Activated T-helper 1 cell treated with anti-CD3 and anti-CD28 coated beads, Interleukin-12 subunit alpha, Interleukin-12 subunit beta, Interleukin-2, Interleukin-4 antibody, amounts not matched to agents 30 ng/mL and 10 ng/mL and 1 ng/mL, durations not matched to agents 14 hours and 24 hours and 36 hours (primary cell): ENCODE measurements at regions of chr10 and their contacts with region 1.

Region 1: GRCh38 chr10:84537447-84537931 is 209.1 kb downstream of the CCSER2 start:
- DNase-seq: peak; percentile 16
- H3K4me3 Mint-ChIP-seq: no peak overlapping the region
- H3K27ac Mint-ChIP-seq: no peak overlapping the region
- H3K4me1 Mint-ChIP-seq: peaks cover 35% of the 10 kb centered on the region
- H3K27me3 Mint-ChIP-seq: peaks cover 5% of the 10 kb centered on the region

Region 2: GRCh38 chr10:84139126-84140035 is 398.1 kb before region 1 on chr10 and contains the start of gene GHITM:
- intact Hi-C with region 1: loop called (anchors 2 kb)
- DNase-seq: peak; percentile 99
- H3K4me3 Mint-ChIP-seq: peak within 1 kb of the TSS; percentile 92
- H3K27ac Mint-ChIP-seq: peak within 1 kb of the TSS; percentile 88
- H3K4me1 Mint-ChIP-seq: peaks cover 27% of the 10 kb centered on the region
- H3K27me3 Mint-ChIP-seq: no peaks in the 10 kb centered on the region
- total RNA-seq, gene GHITM: 140 and 142 TPM in 2 replicates

Region 3: GRCh38 chr10:84352251-84352842 is 185.1 kb before region 1 on chr10:
- intact Hi-C with region 1: loop called (anchors 1 kb)
- DNase-seq: peak; percentile 49
- H3K4me3 Mint-ChIP-seq: no peak overlapping the region
- H3K27ac Mint-ChIP-seq: no peak overlapping the region
- H3K4me1 Mint-ChIP-seq: peaks cover 65% of the 10 kb centered on the region
- H3K27me3 Mint-ChIP-seq: no peaks in the 10 kb centered on the region

Region 4: DNA sequence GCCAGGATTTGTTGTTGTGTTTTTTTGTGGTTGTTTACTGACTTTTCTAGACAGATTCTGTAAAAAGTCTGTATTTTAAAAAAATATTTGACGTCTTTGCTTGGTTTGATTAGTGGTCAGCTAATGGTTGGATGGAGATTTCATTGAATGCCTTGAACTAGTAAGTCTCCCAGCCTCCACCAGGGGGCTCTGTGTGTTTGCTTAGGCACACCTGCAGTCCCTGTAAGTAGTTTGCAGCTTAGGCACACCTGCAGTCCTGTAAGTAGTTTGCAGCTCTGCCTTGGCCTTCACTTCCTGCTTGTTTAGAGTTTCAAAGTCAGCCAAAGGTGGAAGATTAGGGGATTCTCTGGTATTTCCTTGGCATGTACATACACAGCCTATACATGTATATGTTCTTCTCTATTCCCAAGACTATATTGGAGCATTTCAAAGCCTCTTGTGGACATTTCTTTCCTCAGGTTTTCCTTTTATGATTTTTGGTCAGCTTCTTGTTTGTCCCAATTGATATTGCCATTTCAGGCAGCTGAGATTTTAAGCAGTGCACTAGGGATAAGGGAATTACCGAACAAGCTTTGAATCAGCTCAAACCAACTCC is 107.5 kb before region 1 on chr10:
- intact Hi-C with region 1: loop called (anchors 1 kb)
- DNase-seq: peak; percentile 29
- H3K4me3 Mint-ChIP-seq: no peak overlapping the region
- H3K27ac Mint-ChIP-seq: no peak overlapping the region
- H3K4me1 Mint-ChIP-seq: peaks cover 14% of the 10 kb centered on the region
- H3K27me3 Mint-ChIP-seq: no peaks in the 10 kb centered on the region

Region 5: DNA sequence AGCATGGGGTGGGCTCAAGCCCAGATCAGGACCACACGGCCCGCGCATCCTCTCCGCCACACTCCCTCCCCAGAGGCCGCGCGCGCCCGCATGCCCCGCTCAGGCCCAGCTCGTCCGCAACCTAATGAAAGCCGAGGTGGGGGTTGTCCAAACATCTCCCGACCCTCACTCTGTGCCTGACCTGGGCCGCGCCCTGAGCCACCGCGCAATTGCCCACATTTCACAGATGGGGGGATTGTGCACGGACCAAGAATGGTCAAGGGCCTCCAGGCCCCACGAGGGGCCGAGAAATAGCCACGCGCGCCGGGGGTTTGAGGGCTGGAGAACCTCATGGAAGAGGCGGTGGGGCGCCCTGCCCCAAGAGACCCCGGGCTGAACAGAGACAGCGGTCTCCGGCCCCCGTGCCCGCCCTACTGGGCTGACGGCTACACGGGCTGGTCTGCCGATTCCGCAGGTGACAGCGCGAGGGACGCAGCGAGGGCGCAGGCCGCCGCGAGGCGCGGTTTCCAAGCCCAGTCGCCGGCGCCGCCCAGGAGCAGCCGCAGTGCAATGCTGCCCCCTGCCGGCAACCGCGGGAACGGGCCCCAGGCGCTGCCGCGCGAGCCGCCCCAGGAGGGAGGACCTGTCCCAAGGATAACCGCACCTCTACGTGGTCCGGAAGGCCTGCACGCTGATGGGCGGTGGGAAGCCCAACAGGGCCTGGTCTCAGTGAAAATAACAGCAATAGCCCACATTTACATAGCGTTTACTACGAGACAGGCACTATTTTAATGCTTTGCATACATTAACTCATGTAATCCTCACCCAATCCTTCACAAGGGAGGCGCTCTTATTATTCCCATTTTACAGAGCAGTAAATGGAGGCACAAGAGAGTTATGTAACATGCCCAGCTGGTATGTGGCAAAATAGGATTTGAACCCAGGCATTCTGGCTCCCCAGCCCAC is 1839.6 kb after region 1 on chr10:
- intact Hi-C with region 1: loop called (anchors 1 kb)
- DNase-seq: peak; percentile 74
- H3K4me3 Mint-ChIP-seq: no peak overlapping the region
- H3K27ac Mint-ChIP-seq: no peak overlapping the region
- H3K4me1 Mint-ChIP-seq: no peaks in the 10 kb centered on the region
- H3K27me3 Mint-ChIP-seq: peaks cover 31% of the 10 kb centered on the region